Heart left ventricle (tissue), 16 donors: ENCODE measurements at regions of chr9 and their contacts with region 1.

Region 1: GRCh38 chr9:30329431-30329830 is 2055.0 kb upstream of the ACO1 start:
- DNase-seq: no peak
- ATAC-seq: no peak
- H3K4me3 ChIP-seq: no peak overlapping the region
- H3K27ac ChIP-seq: no peak overlapping the region
- H3K4me1 ChIP-seq: no peaks in the 10 kb centered on the region
- H3K27me3 ChIP-seq: no peaks in the 10 kb centered on the region
- CTCF ChIP-seq: no peak
- POLR2A ChIP-seq: no peak

Region 2: GRCh38 chr9:30244877-30245276 is 84.6 kb before region 1 on chr9:
- intact Hi-C with region 1: loop called in 1 of 10 experiments (anchors 10 kb)
- DNase-seq: no peak
- ATAC-seq: no peak
- H3K4me3 ChIP-seq: no peak overlapping the region
- H3K27ac ChIP-seq: no peak overlapping the region
- H3K4me1 ChIP-seq: no peaks in the 10 kb centered on the region
- H3K27me3 ChIP-seq: no peaks in the 10 kb centered on the region
- CTCF ChIP-seq: no peak
- POLR2A ChIP-seq: no peak

Region 3: DNA sequence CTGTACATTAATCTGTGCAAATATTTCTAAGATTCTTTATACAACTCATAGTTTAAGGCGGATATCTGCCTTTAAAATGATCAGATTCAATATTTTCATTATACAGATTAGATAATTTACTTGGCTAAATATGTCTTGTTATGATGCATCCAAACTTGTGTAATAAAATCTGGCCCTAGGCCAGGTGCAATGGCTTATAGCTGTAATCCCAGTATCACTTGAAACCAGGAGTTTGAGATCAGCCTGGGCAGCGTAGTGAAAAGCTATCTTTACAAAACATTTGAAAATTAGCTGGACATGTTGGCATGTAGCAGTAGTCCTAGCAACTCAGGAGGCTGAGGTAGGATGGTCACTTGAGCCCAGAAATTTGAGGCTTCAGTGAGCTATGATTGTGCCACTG is 52.8 kb after region 1 on chr9:
- intact Hi-C with region 1: loop called in 1 of 10 experiments (anchors 10 kb)
- DNase-seq: no peak
- ATAC-seq: no peak
- H3K4me3 ChIP-seq: no peak overlapping the region
- H3K27ac ChIP-seq: no peak overlapping the region
- H3K4me1 ChIP-seq: no peaks in the 10 kb centered on the region
- H3K27me3 ChIP-seq: no peaks in the 10 kb centered on the region
- CTCF ChIP-seq: no peak
- POLR2A ChIP-seq: no peak

Region 4: DNA sequence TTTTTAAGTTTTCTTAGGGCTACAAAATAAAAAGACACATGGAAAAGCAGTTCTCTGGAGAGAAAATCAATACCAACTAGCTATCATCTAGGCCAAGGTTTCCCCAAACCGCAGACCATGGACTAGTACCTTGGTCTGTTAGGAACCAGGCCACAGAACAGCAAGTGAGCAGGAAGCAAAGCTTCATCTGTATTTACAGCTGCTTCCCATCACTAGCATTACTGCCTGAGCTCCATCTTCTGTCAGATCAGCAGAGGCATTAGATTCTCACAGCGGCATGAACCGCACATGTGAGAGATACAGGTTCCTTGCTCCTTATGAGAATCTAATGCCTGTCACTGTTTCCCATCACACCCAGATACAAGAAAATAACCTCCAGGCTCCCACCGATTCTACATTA is 147.4 kb after region 1 on chr9:
- intact Hi-C with region 1: no loop called
- DNase-seq: no peak
- ATAC-seq: no peak
- H3K4me3 ChIP-seq: no peak overlapping the region
- H3K27ac ChIP-seq: no peak overlapping the region
- H3K4me1 ChIP-seq: no peaks in the 10 kb centered on the region
- H3K27me3 ChIP-seq: no peaks in the 10 kb centered on the region
- CTCF ChIP-seq: no peak
- POLR2A ChIP-seq: no peak